ENCODE measurements at regions of chr19 and their contacts with region 1.

Region 1: DNA sequence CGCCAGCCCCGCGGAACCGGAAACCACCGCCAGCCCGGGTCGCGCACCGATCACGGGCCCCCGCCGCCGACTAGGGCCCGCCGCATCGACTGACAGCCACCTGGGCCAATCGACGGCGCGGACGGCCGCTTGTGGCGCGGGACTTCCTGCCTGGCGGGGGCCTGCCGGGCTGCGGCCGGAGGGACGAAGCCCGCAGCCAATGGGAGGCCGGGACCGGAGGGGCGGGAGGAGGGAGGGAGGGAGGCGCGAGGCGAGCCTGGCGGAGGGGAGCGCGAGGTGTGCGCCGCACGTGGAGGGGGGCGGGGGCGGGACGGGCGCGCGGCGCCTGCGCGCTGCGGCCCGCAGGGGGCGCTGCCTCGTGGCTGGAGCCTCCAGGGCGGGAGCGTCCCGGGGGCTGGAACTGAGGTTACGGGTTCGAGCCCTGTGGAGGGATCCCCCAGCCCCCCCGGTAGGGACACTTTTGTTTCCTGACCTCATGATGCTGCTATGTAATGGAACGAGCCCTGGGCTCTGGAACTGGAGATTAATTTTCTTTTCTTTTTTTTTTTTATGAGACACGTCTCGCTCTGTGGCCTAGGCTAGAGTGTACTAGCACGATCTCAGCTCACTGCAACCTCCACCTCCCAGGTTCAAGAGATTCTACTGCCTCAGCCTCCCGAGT is at the start of gene MLLT1:
- DNase-seq: peak; percentile 99
- H3K4me3 ChIP-seq: peak within 1 kb of the TSS; percentile 83 to 96 (median 88)
- H3K27ac ChIP-seq: peak within 1 kb of the TSS; percentile 86 to 93 (median 89)
- H3K4me1 ChIP-seq: peaks cover 40 to 48% (median 48%) of the 10 kb centered on the region in 4 donors
- H3K27me3 ChIP-seq: no peaks in the 10 kb centered on the region
- CTCF ChIP-seq: peak; percentile 61 to 97 (median 89)
- EP300 ChIP-seq: no peak
- POLR2A ChIP-seq: no peak
- total RNA-seq, gene MLLT1: 21.5 to 46.9 (median 33.4) TPM

Region 2: DNA sequence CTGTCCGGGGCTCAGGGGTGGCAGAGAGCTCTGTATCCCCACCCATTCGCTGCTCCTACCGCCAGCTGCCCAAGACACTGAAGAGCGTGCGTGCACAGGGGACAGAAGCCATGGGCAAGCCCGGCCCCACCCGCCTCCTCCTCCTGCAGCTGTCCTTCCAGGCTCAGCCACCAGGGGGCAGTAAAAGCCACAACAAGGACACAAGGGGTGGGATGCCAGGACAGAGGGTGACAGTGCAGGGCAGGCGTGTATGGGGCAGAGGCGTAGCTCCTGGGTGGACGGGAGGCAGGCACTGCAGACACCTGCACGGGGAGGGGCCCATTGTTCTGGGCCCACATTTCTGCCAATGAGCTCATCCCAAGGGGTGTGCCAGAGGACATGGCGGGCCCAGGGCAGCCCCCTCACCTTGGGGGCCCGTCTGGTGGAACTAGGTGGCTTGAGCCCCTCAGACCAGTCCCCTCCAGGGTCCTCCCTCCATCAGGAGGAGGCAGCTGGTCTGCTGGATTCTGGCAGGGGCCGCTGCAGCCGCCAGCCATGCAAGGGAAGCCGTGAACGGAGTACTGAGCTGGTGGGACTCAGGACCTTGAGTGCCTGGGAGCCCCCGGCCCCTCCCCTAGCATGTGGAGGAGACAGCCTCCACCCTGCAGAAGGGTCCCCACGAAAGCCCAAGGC is 61.4 kb before region 1 on chr19:
- intact Hi-C with region 1: loop called (anchors 5 kb)
- DNase-seq: peak; percentile 96
- H3K4me3 ChIP-seq: no peak overlapping the region
- H3K27ac ChIP-seq: peak overlapping the region in 3 of 4 donors; percentile 34 to 51 (median 51)
- H3K4me1 ChIP-seq: peaks cover 48 to 82% (median 55%) of the 10 kb centered on the region in 4 donors
- H3K27me3 ChIP-seq: no peaks in the 10 kb centered on the region
- CTCF ChIP-seq: peak in 2 of 3 experiments; percentile 97 to 99
- EP300 ChIP-seq: no peak
- POLR2A ChIP-seq: no peak

Region 3: GRCh38 chr19:6381030-6381750 is 101.1 kb after region 1 on chr19:
- intact Hi-C with region 1: no loop called
- DNase-seq: no peak
- H3K4me3 ChIP-seq: no peak overlapping the region
- H3K27ac ChIP-seq: no peak overlapping the region
- H3K4me1 ChIP-seq: peaks cover 0 to 27% (median 26%) of the 10 kb centered on the region in 4 donors
- H3K27me3 ChIP-seq: no peaks in the 10 kb centered on the region
- CTCF ChIP-seq: no peak
- EP300 ChIP-seq: no peak
- POLR2A ChIP-seq: no peak

Measured in esophagus muscularis mucosa (tissue), 4 donors.